ENCODE measurements at regions of chr16 and their contacts with region 1.

Region 1: GRCh38 chr16:55760310-55761001 is 72.4 kb downstream of the CES1 start:
- DNase-seq: peak in 1 of 2 donors; percentile 11
- ATAC-seq: peak; percentile 41 to 86 (median 63)
- H3K4me3 ChIP-seq: peak overlapping the region in 7 of 10 donors; percentile 7 to 52 (median 25)
- H3K27ac ChIP-seq: peak overlapping the region in 8 of 10 donors; percentile 1 to 71 (median 46)
- H3K4me1 ChIP-seq: peaks cover 0 to 7% (median 0%) of the 10 kb centered on the region in 9 donors
- H3K27me3 ChIP-seq: peaks cover 0 to 8% (median 0%) of the 10 kb centered on the region in 7 donors
- CTCF ChIP-seq: no peak

Region 2: DNA sequence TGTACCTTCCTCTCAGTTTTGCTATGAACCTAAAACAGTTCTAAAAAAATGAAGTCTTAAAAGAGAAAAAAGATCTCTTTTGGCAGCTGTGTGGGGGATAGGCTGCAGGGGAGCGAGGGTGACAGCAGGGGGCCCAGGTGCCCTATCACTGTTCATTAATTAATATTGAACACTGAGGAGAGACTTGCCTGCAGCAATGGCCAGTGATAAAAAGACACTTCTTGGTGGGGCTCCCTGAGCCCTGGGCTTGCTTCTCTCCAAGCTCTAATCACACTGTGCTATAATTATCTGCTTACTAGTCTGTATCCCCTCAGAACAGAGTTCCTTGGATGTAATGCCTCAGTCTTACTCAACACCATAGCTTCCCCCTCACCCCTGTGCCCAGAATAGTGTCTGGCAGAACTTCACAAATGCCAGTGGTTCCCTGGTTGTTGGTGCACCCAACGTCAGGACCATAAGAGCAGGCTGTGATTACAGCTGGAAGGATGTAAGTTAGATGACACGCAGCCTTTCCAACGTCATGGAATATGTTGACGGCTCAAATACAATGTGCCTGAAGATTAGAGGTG is 488.4 kb before region 1 on chr16:
- intact Hi-C with region 1: no loop called
- DNase-seq: peak; percentile 19 to 27
- ATAC-seq: peak; percentile 17 to 97 (median 94)
- H3K4me3 ChIP-seq: no peak overlapping the region
- H3K27ac ChIP-seq: peak overlapping the region in 3 of 10 donors; percentile 55 to 71 (median 64)
- H3K4me1 ChIP-seq: peaks cover 0 to 6% (median 0%) of the 10 kb centered on the region in 9 donors
- H3K27me3 ChIP-seq: no peaks in the 10 kb centered on the region
- CTCF ChIP-seq: no peak

Region 3: DNA sequence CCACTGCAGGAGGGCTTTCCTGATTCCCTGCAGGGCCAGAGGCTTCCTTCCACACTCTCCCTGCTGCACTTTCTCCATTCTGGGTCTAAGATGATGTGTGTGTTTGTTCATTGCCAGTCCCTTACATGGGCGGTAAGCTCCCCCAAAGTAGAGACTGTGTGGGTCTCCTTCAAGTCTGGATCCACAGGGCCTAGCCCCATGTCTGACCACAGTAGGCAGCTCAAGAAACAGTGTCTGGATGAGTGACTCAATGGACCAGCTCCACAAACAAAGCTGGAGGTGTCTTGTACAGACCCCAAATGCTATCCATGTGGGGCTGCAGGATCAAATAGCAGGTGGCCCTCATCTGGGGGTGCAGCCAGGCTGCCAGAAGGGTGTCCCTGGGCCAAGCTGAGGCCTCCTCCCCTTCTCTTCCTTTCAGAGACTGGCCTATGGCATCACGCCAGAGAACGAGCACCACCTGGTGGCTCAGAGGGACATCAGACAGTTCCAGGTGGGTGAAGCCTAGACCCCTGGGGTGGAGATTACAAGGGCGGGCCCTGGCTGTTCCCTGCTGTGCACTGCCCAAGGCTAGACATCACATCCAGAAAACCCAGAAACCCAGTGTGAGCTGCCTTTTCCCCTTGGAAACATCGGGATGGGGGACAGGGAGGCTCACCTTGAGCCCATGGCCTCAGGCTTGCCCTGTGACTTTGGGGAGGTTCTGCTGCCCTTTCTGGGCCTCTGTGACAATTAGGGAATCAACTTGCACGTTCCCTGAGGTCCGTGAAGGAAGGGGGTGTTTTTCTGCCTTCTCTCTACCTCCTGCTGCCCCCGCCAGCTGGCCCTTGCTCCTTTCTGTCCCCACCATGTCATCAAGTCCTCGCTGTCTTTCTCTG is 58.8 kb before region 1 on chr16:
- intact Hi-C with region 1: no loop called
- DNase-seq: peak; percentile 36 to 61
- ATAC-seq: peak; percentile 24 to 88 (median 70)
- H3K4me3 ChIP-seq: no peak overlapping the region
- H3K27ac ChIP-seq: no peak overlapping the region
- H3K4me1 ChIP-seq: peaks cover 0 to 5% (median 0%) of the 10 kb centered on the region in 9 donors
- H3K27me3 ChIP-seq: peaks cover 0 to 16% (median 3%) of the 10 kb centered on the region in 7 donors
- CTCF ChIP-seq: peak; percentile 28 to 72 (median 67)

Region 4: GRCh38 chr16:55824473-55825000 is 64.1 kb after region 1 on chr16:
- intact Hi-C with region 1: loop called in 1 of 10 experiments (anchors 2 kb)
- DNase-seq: no peak
- ATAC-seq: no peak
- H3K4me3 ChIP-seq: no peak overlapping the region
- H3K27ac ChIP-seq: no peak overlapping the region
- H3K4me1 ChIP-seq: no peaks in the 10 kb centered on the region
- H3K27me3 ChIP-seq: peaks cover 0 to 19% (median 0%) of the 10 kb centered on the region in 7 donors
- CTCF ChIP-seq: no peak

Region 5: DNA sequence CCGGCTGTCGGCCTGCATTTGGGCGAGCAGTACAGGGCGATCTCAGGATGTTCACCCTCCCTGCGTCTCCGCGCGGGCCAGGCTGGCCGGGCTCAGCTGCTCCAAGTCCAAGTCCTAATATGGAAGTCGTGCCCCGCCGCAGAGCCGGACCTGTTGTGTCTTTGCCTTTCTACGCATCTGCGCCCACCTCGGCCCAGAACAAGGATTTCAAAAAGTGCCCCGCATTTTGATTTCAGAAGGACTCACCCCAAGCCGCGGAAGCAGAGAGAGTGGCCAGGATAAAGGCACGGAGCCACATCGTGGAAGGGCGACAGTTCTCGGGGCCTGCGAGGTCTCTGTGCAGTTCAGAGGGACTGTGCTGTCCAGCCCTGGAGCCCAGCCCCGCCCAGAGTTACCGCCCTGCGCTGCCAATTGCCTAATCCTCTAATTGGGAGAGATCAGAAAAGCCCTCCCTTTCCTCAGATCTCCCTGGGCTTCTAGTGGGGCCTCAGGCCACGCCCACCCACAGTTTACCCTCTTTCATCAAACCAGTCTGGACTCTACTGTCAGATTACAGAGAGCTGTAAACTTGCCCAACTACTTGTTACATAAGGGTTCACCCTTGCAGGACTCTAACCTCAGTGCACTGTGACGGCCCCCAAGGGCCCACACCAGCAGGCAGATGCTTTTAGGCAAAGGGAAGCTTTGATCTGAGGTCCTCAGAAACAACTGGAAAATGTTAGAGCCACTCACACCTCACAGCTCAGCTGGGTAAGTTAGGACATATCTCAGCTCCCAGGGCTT is 72.5 kb after region 1 on chr16 and contains the start of gene CES1:
- intact Hi-C with region 1: loop called in 5 of 10 experiments (anchors 2 to 10 kb)
- DNase-seq: peak; percentile 64 to 68
- ATAC-seq: peak; percentile 61 to 88 (median 75)
- H3K4me3 ChIP-seq: peak within 1 kb of the TSS in 9 of 10 donors; percentile 2 to 47 (median 24)
- H3K27ac ChIP-seq: peak within 1 kb of the TSS in 7 of 10 donors; percentile 10 to 59 (median 40)
- H3K4me1 ChIP-seq: peaks cover 0 to 21% (median 6%) of the 10 kb centered on the region in 9 donors
- H3K27me3 ChIP-seq: peaks cover 0 to 6% (median 0%) of the 10 kb centered on the region in 7 donors
- CTCF ChIP-seq: no peak
- total RNA-seq, gene CES1: 7.1 to 24.9 (median 21.7) TPM